ENCODE measurements at regions of chr7 and their contacts with region 1.

Region 1: GRCh38 chr7:79199961-79200360 is 253.5 kb downstream of the MAGI2 start:
- DNase-seq: no peak
- H3K4me3 ChIP-seq: no peak overlapping the region
- H3K27ac ChIP-seq: no peak overlapping the region
- H3K4me1 ChIP-seq: no peaks in the 10 kb centered on the region
- H3K27me3 ChIP-seq: no peaks in the 10 kb centered on the region
- CTCF ChIP-seq: no peak
- EP300 ChIP-seq: no peak
- POLR2A ChIP-seq: no peak

Region 2: DNA sequence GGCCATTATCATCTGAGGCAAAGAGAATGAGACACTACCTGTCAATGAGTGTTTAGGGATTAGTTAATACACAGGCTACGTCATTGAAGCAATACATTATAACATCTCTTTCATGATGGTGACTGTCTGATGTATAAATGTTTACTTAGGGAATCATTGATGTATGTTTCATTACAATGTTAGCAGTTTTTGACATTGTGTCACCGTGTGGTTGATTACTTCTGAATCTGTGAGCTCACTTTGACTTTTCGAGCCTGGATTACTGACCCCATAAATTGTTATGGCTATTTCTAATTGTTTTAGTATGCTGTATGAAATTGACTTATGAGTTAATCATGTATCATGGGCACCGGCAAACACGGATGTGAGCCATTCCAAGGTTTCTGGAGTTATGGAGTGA is 240.5 kb before region 1 on chr7:
- intact Hi-C with region 1: no loop called
- DNase-seq: no peak
- H3K4me3 ChIP-seq: no peak overlapping the region
- H3K27ac ChIP-seq: no peak overlapping the region
- H3K4me1 ChIP-seq: no peaks in the 10 kb centered on the region
- H3K27me3 ChIP-seq: no peaks in the 10 kb centered on the region
- CTCF ChIP-seq: no peak
- EP300 ChIP-seq: no peak
- POLR2A ChIP-seq: no peak

Region 3: DNA sequence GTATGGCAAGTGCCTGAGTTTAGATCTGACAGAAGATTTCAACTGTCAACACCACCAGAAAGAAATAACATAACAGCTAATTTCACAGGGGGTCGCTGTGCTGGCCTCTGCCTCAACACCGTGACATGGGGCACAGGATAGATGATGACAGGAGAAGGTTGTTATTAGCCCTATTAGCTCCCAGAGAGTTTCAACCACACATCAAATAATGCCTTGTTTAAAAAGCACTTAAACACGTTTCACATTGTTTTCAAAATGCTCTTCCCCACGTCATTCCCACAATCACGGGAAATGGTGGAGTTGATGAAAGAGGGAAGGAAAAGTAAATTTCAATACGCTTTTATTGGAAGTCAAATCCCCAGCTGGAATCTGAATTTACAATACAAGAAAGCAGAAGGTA is 68.8 kb after region 1 on chr7:
- intact Hi-C with region 1: loop called in 1 of 4 experiments (anchors 10 kb)
- DNase-seq: no peak
- H3K4me3 ChIP-seq: no peak overlapping the region
- H3K27ac ChIP-seq: no peak overlapping the region
- H3K4me1 ChIP-seq: peaks cover 1% of the 10 kb centered on the region
- H3K27me3 ChIP-seq: no peaks in the 10 kb centered on the region
- CTCF ChIP-seq: no peak
- EP300 ChIP-seq: no peak
- POLR2A ChIP-seq: no peak

Measured in ovary (tissue), 10 donors.